ENCODE measurements at regions of chr1 and their contacts with region 1.

Region 1: DNA sequence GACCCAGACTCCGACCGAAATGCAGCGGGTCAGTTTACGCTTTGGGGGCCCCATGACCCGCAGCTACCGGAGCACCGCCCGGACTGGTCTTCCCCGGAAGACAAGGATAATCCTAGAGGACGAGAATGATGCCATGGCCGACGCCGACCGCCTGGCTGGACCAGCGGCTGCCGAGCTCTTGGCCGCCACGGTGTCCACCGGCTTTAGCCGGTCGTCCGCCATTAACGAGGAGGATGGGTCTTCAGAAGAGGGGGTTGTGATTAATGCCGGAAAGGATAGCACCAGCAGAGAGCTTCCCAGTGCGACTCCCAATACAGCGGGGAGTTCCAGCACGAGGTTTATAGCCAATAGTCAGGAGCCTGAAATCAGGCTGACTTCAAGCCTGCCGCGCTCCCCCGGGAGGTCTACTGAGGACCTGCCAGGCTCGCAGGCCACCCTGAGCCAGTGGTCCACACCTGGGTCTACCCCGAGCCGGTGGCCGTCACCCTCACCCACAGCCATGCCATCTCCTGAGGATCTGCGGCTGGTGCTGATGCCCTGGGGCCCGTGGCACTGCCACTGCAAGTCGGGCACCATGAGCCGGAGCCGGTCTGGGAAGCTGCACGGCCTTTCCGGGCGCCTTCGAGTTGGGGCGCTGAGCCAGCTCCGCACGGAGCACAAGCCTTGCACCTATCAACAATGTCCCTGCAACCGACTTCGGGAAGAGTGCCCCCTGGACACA is 534 bp downstream of the C1orf56 start:
- DNase-seq: no peak
- H3K4me3 ChIP-seq: peak overlapping the region; percentile 74
- CTCF ChIP-seq: peak; percentile 50

Region 2: DNA sequence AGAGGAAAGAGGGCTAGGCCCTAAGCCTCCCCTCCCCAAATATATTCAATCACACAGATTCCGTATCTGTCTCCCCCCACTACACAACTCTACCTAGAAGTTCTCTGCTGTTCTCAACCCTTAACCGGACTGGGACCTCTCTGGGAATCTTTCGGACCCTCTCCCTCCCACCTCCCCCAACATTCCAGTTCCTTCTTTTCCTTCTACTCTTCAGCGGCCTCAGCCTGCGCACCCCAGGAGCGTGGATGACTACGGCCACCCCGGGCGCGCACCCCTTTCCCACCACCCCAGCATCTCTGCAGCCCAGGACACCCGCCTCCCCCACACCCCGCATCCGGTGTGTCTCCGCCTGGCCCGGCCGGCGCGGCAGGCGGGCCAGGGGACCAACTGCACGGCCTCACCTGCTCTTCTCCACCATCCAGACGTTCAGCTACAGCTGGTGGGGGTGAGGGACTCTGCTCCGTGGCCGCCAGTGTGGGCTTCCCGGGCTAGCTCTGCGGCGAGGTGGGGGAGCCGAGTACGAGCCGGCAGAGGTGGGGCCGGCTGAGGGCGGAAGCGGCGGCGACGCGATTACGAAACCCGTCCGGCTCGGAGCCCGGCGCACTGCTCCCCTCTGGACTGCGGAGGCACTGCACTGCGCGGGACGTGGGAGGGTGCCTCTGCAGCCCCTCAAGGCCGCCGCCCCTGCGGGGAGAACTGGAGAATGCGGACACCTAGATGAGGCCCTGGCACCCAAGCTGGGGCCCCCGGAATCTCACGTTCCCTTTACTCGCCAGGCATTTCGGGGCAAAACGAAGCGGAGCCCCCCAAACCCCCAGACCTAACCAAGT is 11.2 kb after region 1 on chr1 and contains the start of gene CDC42SE1:
- CTCF ChIA-PET with region 1: interaction called, 26 read pairs
- POLR2A ChIA-PET with region 1: interaction called, 56 read pairs
- DNase-seq: peak; percentile 10
- H3K4me3 ChIP-seq: peak within 1 kb of the TSS; percentile 94
- CTCF ChIP-seq: peak; percentile 92